ENCODE measurements at regions of chr17 and their contacts with region 1.

Region 1: DNA sequence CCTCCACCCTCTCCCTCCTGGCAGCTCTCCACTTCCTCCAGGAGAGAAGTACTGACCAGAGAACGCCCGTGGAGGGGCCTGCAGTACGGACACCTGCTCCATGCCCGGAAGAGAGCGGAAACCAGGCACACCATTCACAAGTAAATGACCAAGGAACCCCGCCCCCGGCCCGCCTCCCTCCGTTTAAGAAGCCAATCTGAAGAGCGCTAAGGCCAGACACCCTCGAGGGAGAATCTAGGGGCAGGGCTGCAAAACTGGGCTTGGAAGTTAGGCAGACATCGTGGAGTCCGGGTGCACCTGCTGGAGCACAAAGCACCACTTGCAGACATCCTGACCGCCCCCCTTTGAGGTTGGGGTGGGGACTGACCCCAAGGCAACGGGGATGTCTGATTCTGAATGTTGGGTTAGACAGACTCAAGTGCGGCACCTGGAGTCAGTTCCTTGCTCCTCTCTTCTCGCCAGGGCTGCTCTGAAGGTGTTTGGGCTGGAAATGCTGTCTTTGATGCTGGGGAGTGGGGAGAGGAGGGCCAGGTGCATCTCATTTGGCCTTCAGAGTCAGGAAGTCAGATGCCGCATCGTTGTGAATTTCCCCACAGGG is 964 bp upstream of the FAAP100 start:
- DNase-seq: peak; percentile 90
- ATAC-seq: peak; percentile 78
- H3K4me3 Mint-ChIP-seq: peak overlapping the region; percentile 82
- H3K27ac Mint-ChIP-seq: peak overlapping the region; percentile 89
- H3K4me1 Mint-ChIP-seq: peaks cover 41% of the 10 kb centered on the region
- H3K27me3 Mint-ChIP-seq: no peaks in the 10 kb centered on the region

Region 2: DNA sequence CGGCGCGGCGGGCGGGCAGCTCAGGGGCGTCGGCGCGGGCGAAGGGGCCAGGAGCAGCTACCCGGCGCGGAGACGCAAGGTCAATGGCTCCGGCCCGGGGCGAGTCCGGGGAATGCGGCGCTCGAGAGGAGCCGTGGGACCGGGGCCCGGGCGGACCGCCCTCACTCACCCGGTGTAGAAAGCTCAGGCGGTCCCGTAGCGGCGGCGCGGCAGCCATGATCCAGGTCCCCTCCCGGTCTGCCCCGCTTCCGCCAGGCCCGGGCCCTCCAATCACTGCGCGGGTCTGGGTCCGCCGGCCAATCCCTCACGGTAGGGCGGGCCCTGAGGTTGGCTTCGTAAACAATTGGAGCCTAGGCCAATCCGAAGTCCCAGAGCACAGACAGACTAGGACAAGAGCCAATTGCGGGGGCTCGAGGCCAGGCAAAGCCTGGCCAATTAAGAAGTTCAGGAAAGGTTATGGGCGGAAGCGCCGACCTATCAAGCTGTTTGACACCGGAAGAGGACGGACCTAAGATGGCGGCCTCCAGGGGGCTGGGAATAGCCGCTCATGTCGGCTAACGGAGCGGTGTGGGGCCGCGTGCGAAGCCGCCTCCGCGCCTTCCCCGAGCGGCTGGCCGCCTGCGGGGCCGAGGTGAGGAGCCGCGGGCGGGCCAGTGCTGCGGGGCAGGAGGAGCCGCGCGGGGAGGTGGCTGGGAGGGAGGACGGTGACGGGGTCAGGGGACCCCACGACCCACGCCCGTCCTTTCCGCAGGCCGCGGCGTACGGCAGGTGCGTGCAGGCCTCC is 314.1 kb before region 1 on chr17 and contains the starts of genes NDUFAF8 and TEPSIN:
- CTCF ChIA-PET with region 1: no interaction called
- DNase-seq: peak; percentile 98
- ATAC-seq: peak; percentile 98
- H3K4me3 Mint-ChIP-seq: peak within 1 kb of the TSS; percentile 88
- H3K27ac Mint-ChIP-seq: peak within 1 kb of the TSS; percentile 88
- H3K4me1 Mint-ChIP-seq: peaks cover 35% of the 10 kb centered on the region
- H3K27me3 Mint-ChIP-seq: no peaks in the 10 kb centered on the region
- total RNA-seq, gene NDUFAF8: 41.6 to 53.7 TPM
- total RNA-seq, gene TEPSIN: 53.6 to 56.3 TPM

Region 3: GRCh38 chr17:81470944-81471803 is 81.9 kb before region 1 on chr17:
- CTCF ChIA-PET with region 1: no interaction called
- DNase-seq: no peak
- ATAC-seq: no peak
- H3K4me3 Mint-ChIP-seq: no peak overlapping the region
- H3K27ac Mint-ChIP-seq: no peak overlapping the region
- H3K4me1 Mint-ChIP-seq: no peaks in the 10 kb centered on the region
- H3K27me3 Mint-ChIP-seq: no peaks in the 10 kb centered on the region

Region 4: DNA sequence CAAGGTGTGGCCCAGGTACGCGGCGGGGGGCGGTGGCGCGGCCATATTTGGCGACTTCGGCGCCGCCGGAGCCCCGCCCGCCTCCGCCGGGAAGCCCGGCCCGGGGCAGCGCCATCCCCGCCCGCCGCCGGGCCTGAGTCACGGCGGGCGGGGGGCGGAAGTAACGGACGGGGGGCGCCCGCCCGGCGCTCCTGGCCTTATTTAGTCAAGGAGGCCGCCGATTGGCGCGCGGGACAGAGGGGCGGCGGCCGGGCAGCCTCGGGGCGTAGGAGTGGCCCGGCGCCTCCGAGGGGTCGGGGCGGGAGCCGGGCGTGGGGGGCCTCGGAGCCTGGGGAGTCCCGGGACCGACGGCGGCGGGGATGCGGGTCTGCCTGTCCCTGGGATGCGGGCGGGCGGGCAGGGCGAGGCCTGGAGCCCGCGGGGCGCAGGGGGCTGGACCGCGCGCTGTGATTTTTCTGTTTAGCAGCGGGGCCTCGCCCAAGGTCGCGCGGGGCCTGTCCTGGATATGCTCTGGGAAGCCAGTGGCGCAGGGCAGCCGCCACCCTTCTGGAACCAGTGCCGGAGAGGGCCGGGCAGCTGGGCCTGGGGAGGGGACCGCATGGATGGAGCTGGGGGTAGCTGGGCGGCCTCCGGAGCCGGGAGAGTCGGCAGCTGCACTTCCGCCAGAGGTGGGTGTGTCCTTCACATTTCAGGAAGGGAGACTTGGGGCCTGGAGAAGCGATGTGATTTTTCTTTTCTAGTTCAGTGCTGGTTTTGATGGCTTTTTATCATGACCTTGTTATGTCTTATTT is 38.2 kb before region 1 on chr17:
- CTCF ChIA-PET with region 1: interaction called, 12 read pairs
- DNase-seq: peak; percentile 79
- ATAC-seq: peak; percentile 47
- H3K4me3 Mint-ChIP-seq: peak overlapping the region; percentile 94
- H3K27ac Mint-ChIP-seq: peak overlapping the region; percentile 89
- H3K4me1 Mint-ChIP-seq: peaks cover 34% of the 10 kb centered on the region
- H3K27me3 Mint-ChIP-seq: no peaks in the 10 kb centered on the region

Measured in activated CD8-positive, alpha-beta memory T cell treated with anti-CD3 and anti-CD28 coated beads, Interleukin-2, amount 10 ng/mL, durations not matched to agents 7 days and 5 days (primary cell).